Calu3 (cell line): ENCODE measurements at regions of chr15 and their contacts with region 1.

Region 1: DNA sequence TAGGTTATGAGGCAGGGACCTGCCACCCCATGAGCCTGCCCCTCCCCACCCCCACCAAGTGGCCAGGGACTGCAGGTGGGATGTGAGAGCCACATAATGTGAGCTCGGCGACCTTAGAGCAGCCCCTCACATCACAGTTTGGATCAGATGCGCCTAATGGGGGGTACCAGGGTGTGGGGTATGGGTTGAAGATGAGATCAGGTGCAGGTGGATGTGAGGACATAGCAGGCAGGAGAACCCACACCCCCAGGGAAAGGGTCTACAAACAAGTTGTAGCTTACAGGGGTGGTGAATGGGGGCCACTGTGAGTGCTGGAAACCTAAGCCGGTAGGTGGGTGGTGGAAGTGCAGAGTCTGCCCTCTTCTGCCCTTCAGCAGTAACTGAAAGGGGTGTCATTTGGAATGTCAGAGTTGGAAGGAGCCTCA is 94.0 kb downstream of the CORO2B start:
- DNase-seq: no peak
- H3K4me3 Mint-ChIP-seq: no peak overlapping the region
- H3K27ac Mint-ChIP-seq: no peak overlapping the region
- H3K4me1 Mint-ChIP-seq: peaks cover 9% of the 10 kb centered on the region
- H3K27me3 Mint-ChIP-seq: peaks cover 80% of the 10 kb centered on the region
- CTCF ChIP-seq: peak; percentile 21

Region 2: GRCh38 chr15:68550481-68551295 is 122.1 kb before region 1 on chr15:
- CTCF ChIA-PET with region 1: interaction called, 30 read pairs
- intact Hi-C with region 1: loop called (anchors 1 kb)
- DNase-seq: peak; percentile 85
- H3K4me3 Mint-ChIP-seq: no peak overlapping the region
- H3K27ac Mint-ChIP-seq: no peak overlapping the region
- H3K4me1 Mint-ChIP-seq: no peaks in the 10 kb centered on the region
- H3K27me3 Mint-ChIP-seq: peaks cover 72% of the 10 kb centered on the region
- CTCF ChIP-seq: peak; percentile 95

Region 3: DNA sequence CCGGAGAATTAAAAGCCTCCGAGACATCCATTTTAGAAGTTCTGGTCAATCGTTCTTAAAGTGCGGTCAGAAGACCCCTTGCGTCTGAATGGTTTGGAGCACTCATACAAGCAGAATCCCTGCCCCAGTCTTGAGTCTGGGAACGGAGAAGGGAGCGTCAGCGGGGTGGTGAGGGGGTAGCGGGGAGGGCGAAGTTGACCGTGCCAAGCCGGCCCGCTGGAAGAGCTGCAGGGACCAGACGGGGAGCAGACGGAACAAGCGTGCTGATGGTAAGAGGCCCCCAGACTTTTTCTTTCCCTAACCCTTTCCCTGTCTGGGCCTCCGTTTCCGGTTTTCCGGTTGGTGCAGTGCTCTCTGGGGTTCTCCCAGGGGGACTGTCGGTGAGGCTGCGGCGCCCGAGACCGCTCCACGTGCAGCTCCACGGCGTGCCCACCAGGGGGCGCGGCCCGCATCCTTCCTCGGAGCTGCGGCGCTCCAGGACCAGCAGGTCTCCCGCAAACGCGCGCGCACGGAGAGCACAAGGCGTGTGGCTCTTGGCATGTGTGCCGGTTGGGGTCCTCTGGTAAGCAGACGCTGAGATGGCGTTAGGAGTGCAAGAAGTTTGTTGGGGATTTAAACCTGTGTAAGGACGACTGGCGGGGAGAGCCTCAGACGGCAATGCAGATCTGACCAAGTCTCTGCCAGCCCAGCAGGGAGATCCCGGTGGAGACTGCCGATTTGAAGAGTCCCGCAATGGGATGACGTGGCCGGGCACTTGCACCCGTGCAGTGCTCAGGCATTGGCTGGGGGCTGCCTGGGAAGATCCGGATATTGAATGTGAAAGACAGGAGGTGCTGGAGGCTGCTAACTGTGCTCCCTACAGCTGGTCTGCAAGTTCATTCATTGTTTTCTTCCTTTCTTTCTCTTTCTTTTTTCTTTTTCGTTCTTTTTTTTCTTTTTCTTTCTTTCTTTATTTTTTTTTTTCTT is 113.2 kb before region 1 on chr15:
- CTCF ChIA-PET with region 1: interaction called, 35 read pairs
- intact Hi-C with region 1: loop called (anchors 1 kb)
- DNase-seq: peak; percentile 90
- H3K4me3 Mint-ChIP-seq: peak overlapping the region; percentile 78
- H3K27ac Mint-ChIP-seq: no peak overlapping the region
- H3K4me1 Mint-ChIP-seq: peaks cover 23% of the 10 kb centered on the region
- H3K27me3 Mint-ChIP-seq: peaks cover 90% of the 10 kb centered on the region
- CTCF ChIP-seq: peak; percentile 91